ENCODE measurements at regions of chr7 and their contacts with region 1.

Region 1: DNA sequence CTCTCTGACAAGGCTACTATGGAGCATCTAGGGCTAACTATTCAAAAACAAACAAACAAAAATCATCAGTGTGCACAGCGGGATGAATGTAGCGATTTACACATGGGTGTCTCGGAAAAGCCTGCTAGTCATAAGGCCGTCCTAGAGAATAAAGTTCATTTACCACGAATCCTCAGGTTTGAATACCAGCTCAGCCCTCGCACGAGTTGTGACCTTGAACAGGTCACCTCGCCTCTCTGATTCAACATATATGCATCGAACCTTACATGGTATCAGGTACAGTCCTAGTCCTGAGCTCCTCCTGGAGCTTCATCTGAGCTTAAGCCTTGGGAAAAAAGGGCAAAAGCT is 572 bp downstream of the ATP5MF start:
- DNase-seq: no peak
- H3K4me3 ChIP-seq: peak overlapping the region; percentile 97
- H3K27ac ChIP-seq: peak overlapping the region; percentile 73
- H3K27me3 ChIP-seq: no peaks in the 10 kb centered on the region
- CTCF ChIP-seq: no peak

Region 2: DNA sequence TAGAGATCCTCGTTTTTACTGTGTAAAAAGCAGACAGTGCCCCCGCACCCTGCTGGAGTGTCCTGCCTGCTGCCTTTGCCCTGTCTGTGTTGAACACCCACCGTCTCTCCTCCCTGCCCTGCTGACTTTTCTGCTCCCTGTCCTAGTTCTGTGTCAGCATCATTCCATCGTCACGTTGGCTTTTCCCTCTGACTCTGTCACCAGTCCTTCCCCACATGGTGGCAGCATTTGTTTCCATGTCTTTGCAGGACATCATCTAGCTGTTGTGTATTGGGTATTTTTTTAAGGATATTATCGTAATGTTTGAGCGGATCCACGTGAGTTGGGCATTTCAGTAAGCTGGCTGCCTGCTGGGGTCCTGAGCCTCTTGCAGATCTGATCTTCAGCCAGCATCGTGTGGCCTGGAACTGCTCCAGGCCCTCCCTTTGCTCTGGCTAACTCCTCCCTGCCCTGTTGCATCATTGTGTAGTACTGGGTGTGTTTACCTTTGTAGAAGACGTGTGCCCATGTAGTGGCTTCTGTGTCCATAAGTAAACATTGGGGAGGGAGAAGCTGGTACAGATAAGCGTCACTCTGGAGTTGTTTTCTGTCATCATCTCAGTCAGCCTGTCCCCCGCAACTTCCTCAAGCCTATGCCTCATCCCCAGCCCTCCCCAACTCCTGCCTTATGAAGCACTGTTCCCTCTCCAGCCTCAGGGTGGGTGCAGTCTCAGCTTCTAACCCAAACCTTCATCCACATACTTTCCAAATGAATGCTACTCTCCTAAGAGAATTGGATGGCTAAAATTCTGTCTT is 542.8 kb before region 1 on chr7:
- CTCF ChIA-PET with region 1: no interaction called
- POLR2A ChIA-PET with region 1: interaction called, 10 read pairs
- DNase-seq: peak; percentile 41
- H3K4me3 ChIP-seq: no peak overlapping the region
- H3K27ac ChIP-seq: peak overlapping the region; percentile 31
- H3K27me3 ChIP-seq: no peaks in the 10 kb centered on the region
- CTCF ChIP-seq: no peak

Region 3: DNA sequence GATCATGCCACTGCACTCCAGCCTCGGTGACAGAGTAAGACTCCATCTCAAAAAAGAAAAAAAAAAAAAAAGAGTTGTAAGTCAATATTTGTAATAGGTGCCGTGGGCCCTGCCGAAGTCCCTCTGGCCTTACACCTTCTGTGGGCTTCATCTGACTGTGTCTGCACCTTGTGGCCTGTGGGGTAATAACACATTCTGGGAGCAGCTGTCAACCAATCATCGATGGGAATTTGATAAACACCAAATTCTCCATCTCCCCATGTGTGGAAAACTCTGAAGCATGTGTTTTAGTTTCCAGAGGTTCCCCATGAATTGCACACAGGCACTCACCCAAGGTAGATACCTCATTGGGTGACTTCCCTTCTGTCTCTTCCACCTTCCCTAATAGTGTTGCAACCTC is 23.8 kb after region 1 on chr7:
- CTCF ChIA-PET with region 1: no interaction called
- POLR2A ChIA-PET with region 1: no interaction called
- DNase-seq: no peak
- H3K4me3 ChIP-seq: no peak overlapping the region
- H3K27ac ChIP-seq: no peak overlapping the region
- H3K27me3 ChIP-seq: no peaks in the 10 kb centered on the region
- CTCF ChIP-seq: no peak

Region 4: GRCh38 chr7:99893280-99893679 is 427.9 kb after region 1 on chr7:
- CTCF ChIA-PET with region 1: no interaction called
- POLR2A ChIA-PET with region 1: no interaction called
- DNase-seq: no peak
- H3K4me3 ChIP-seq: no peak overlapping the region
- H3K27ac ChIP-seq: no peak overlapping the region
- H3K27me3 ChIP-seq: no peaks in the 10 kb centered on the region
- CTCF ChIP-seq: no peak

Region 5: DNA sequence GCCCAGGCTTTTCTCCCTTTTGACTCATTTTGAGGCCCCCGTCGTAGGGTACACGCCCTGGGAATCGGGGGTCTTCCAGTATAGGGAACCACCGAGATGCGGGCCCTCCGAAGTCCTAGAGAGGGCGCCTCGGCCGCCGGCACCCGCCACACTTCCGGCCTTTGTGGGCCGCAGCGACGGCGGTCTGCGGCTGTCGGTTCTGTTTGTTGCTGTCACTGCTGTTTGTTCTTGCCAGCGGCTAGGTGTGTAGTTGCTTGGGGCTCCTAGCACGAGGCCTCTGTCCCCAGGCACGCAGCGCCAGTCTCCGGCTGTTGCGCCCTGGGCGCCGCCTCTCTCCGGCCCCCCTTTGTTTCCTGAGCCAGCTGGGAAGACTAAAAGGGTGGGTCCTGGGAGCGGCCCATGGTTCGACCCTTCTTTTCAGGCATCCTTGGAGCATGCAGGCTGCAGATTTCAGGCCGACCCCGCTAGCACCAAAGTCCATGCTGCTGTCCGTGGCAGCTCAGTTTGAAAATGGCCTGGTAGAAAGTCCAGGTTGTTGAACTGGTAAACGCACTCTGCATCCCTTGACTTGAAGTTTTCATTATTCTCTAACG is 532.2 kb after region 1 on chr7:
- CTCF ChIA-PET with region 1: interaction called, 10 read pairs
- POLR2A ChIA-PET with region 1: no interaction called
- DNase-seq: no peak
- H3K4me3 ChIP-seq: peak overlapping the region; percentile 39
- H3K27ac ChIP-seq: no peak overlapping the region
- H3K27me3 ChIP-seq: no peaks in the 10 kb centered on the region
- CTCF ChIP-seq: peak; percentile 23; the same call in 1 of the 2 replicates

Region 6: GRCh38 chr7:100044701-100045100 is 579.3 kb after region 1 on chr7:
- CTCF ChIA-PET with region 1: no interaction called
- POLR2A ChIA-PET with region 1: no interaction called
- DNase-seq: no peak
- H3K4me3 ChIP-seq: no peak overlapping the region
- H3K27ac ChIP-seq: no peak overlapping the region
- H3K27me3 ChIP-seq: no peaks in the 10 kb centered on the region
- CTCF ChIP-seq: no peak